GM12878 (cell line): ENCODE measurements at regions of chr4 and their contacts with region 1.

Region 1: DNA sequence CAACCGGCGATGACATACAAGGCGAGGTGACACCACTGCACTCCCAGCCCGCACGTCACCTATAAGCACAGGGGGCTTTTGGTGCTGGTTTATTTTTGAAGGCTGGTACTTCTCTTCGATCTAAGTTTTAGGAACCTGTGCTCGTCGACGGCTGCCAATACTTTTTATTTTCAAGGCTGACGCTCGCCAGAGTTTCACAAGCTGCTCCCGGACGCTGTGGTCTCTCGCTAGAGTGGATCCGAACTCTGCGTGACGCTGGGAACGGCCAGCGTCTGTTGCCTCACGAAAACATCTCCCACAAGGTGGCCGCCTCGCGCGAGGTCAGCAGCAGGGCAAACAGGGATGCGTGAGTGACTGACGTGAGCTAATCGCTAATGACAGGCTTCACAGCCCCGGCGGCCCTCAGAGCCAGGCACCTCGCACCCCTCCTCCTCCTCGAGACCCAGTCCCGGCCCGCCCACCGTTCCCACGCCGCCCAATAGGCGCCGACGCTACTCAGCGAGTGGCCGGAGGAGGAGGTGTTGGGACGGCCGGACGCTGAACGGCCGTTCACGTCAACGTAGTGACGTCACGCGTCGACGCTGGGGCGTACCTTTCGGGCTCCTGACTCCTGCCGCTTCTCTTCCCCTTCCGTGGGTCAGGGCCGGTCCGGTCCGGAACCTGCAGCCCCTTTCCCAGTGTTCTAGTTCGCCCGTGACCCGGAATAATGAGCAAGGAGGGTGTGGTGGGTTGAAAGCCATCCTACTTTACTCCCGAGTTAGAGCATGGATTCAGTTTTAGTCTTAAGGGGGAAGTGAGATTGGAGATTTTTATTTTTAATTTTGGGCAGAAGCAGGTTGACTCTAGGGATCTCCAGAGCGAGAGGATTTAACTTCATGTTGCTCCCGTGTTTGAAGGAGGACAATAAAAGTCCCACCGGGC is at the start of gene CLCN3:
- DNase-seq: peak; percentile 93
- ATAC-seq: peak; percentile 93
- H3K4me3 ChIP-seq: peak within 1 kb of the TSS; percentile 90
- H3K27ac ChIP-seq: peak within 1 kb of the TSS; percentile 99
- H3K4me1 ChIP-seq: peaks cover 5% of the 10 kb centered on the region; the same call in 1 of the 2 replicates
- H3K27me3 ChIP-seq: no peaks in the 10 kb centered on the region
- CTCF ChIP-seq: no peak
- EP300 ChIP-seq: peak in 1 of 2 experiments; percentile 78; a peak in 3 of 4 replicates
- POLR2A ChIP-seq: peak; percentile 94
- RAD21 ChIP-seq: no peak
- polyA plus RNA-seq, gene CLCN3: 4.0 to 4.7 TPM

Region 2: GRCh38 chr4:169675825-169676224 is 55.6 kb after region 1 on chr4:
- CTCF ChIA-PET with region 1: no interaction called
- POLR2A ChIA-PET with region 1: no interaction called
- RAD21 ChIA-PET with region 1: interaction called, 4 read pairs
- SMC1A ChIA-PET with region 1: interaction called, 3 read pairs
- in situ Hi-C with region 1: no loop called
- intact Hi-C with region 1: loop called (anchors 5 kb)
- DNase-seq: no peak
- ATAC-seq: peak; percentile 88
- H3K4me3 ChIP-seq: no peak overlapping the region
- H3K27ac ChIP-seq: no peak overlapping the region
- H3K4me1 ChIP-seq: no peaks in the 10 kb centered on the region
- H3K27me3 ChIP-seq: no peaks in the 10 kb centered on the region
- CTCF ChIP-seq: no peak
- EP300 ChIP-seq: no peak
- POLR2A ChIP-seq: no peak
- RAD21 ChIP-seq: no peak

Region 3: DNA sequence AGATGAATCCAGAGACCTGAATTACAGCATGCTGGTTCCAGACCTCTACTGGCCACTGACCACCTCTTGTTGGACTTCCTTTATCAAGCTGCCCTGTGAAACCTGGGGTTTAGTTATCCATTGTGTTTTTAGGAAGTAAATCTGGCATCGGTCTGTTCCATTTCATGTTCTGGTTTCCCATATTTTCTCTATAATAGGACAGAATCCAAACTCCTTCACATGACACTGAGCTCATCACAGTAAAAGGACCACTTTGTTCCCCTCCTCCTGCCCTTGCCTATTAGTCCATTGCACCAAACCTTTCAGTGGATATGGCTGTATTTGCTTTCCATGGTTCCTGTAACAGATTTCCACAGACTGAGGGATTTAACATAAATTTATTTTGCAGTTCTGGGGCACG is 402.0 kb after region 1 on chr4:
- CTCF ChIA-PET with region 1: no interaction called
- POLR2A ChIA-PET with region 1: no interaction called
- RAD21 ChIA-PET with region 1: no interaction called
- SMC1A ChIA-PET with region 1: no interaction called
- in situ Hi-C with region 1: no loop called
- intact Hi-C with region 1: loop called (anchors 5 kb)
- DNase-seq: no peak
- ATAC-seq: no peak
- H3K4me3 ChIP-seq: no peak overlapping the region
- H3K27ac ChIP-seq: no peak overlapping the region
- H3K4me1 ChIP-seq: 0 out of 2 replicates have a peak, but pooled peaks cover under 1% of the 10 kb centered on the region
- H3K27me3 ChIP-seq: peaks cover 0 to 8% of the 10 kb centered on the region in 2 experiments; a peak in 2 of 4 replicates
- CTCF ChIP-seq: no peak
- EP300 ChIP-seq: no peak
- POLR2A ChIP-seq: no peak
- RAD21 ChIP-seq: no peak

Region 4: GRCh38 chr4:170040031-170040680 is 419.9 kb after region 1 on chr4:
- CTCF ChIA-PET with region 1: interaction called, 4 read pairs
- POLR2A ChIA-PET with region 1: no interaction called
- RAD21 ChIA-PET with region 1: no interaction called
- SMC1A ChIA-PET with region 1: no interaction called
- in situ Hi-C with region 1: loop called (anchors 5 kb)
- intact Hi-C with region 1: no loop called
- DNase-seq: no peak
- ATAC-seq: no peak
- H3K4me3 ChIP-seq: no peak overlapping the region
- H3K27ac ChIP-seq: no peak overlapping the region
- H3K4me1 ChIP-seq: no peaks in the 10 kb centered on the region
- H3K27me3 ChIP-seq: no peaks in the 10 kb centered on the region
- CTCF ChIP-seq: no peak
- EP300 ChIP-seq: no peak
- POLR2A ChIP-seq: no peak
- RAD21 ChIP-seq: no peak